ENCODE measurements at regions of chr21 and their contacts with region 1.

Region 1: DNA sequence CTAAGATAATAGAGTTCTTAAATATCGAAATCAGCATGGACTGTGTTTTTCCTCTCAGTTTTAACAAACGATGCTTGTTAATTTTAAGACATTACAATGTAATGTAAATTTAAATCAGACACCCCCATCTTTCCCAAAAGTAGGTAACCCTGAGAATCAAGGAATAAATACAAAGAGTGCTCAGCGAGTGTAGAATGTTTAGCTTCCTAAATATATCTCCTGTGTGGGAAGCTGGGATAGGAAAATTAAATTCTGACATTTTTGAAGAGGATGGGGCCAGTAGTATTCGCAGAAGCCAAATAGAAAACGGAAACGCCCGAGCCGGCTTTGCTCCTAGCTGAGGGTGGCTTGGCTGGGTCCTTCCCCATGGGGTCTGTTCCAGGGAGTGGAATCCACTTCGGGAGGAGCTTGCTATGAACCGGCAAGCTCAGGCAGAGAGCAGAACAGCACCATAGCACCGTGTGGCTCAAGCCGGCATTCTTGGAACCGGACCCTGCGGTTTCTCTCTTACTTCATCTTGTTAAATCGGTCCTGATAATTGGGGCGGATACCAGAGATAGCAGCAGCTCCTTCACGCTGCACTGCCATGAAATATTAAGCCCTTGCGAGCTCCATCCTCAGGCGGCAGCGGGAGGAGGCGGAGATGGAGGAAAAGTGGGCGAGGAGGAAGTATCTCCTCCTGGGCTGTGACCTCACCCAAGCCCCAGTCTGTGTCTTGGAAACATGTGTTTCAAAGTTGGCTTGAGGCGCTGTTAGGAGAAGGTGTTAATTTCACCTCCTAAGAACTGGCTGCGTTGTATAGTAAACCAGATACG is 24.9 kb downstream of the MAP3K7CL start:
- DNase-seq: peak; percentile 52
- H3K4me3 ChIP-seq: peak overlapping the region; percentile 14 to 41 (median 18)
- H3K27ac ChIP-seq: peak overlapping the region; percentile 20 to 79
- H3K4me1 ChIP-seq: no peaks in the 10 kb centered on the region
- H3K27me3 ChIP-seq: no peaks in the 10 kb centered on the region
- CTCF ChIP-seq: no peak
- POLR2A ChIP-seq: no peak

Region 2: GRCh38 chr21:29332461-29333362 is 177.4 kb after region 1 on chr21:
- intact Hi-C with region 1: loop called (anchors 10 kb)
- DNase-seq: no peak
- H3K4me3 ChIP-seq: no peak overlapping the region
- H3K27ac ChIP-seq: no peak overlapping the region
- H3K4me1 ChIP-seq: no peaks in the 10 kb centered on the region
- H3K27me3 ChIP-seq: no peaks in the 10 kb centered on the region
- CTCF ChIP-seq: no peak
- POLR2A ChIP-seq: no peak